OCI-LY7 (cell line): ENCODE measurements at regions of chr9 and their contacts with region 1.

Region 1: GRCh38 chr9:117927354-117927753 is 223.2 kb downstream of the TLR4 start:
- DNase-seq: peak; percentile 26
- H3K4me3 ChIP-seq: no peak overlapping the region
- H3K27ac ChIP-seq: no peak overlapping the region
- H3K4me1 ChIP-seq: no peaks in the 10 kb centered on the region
- CTCF ChIP-seq: peak; percentile 72

Region 2: GRCh38 chr9:118148990-118149389 is 221.6 kb after region 1 on chr9:
- CTCF ChIA-PET with region 1: no interaction called
- POLR2A ChIA-PET with region 1: no interaction called
- intact Hi-C with region 1: loop called (anchors 10 kb)
- DNase-seq: no peak
- H3K4me3 ChIP-seq: no peak overlapping the region
- H3K27ac ChIP-seq: no peak overlapping the region
- H3K4me1 ChIP-seq: no peaks in the 10 kb centered on the region
- CTCF ChIP-seq: no peak